ENCODE measurements at regions of chr12 and their contacts with region 1.

Region 1: DNA sequence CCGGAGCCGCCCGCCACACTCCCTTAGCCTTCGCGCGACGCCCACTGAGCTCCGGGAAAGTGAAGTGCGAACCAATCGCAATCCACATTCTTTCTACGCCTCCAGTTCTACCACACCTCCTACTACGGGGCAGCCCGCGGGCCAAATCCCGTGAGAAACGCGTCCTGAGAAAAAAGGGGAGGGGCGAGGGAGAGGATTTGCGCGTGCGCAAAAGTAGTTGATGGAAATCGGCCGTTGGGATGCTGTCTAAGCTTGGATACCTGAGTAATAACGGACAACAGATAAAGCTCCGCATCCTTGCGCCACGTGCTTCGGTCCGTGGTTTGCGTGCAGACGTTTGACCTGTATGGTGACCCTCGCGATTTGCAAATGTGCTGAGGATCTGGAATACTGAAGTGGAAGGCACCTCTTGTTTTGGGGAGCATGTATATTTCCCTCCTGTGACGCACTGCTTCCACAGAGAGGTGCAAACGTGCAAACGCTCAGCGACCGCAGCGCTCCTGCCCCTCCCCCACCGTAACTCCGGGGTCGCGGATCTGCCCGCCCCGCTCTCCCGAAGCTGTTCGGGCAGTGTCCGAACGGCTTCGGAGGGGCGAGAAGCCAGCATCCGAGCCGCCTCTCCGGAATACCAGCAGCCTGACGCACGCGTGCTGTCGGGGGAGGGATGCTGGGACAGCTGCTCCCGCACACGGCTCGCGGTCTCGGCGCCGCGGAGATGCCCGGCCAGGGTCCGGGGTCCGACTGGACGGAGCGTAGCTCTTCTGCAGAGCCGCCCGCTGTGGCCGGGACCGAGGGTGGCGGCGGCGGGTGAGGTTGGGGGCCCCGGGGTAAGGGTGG is at the starts of genes FAM216A and GPN3:
- DNase-seq: peak; percentile 93 to 99 (median 97)

Region 2: DNA sequence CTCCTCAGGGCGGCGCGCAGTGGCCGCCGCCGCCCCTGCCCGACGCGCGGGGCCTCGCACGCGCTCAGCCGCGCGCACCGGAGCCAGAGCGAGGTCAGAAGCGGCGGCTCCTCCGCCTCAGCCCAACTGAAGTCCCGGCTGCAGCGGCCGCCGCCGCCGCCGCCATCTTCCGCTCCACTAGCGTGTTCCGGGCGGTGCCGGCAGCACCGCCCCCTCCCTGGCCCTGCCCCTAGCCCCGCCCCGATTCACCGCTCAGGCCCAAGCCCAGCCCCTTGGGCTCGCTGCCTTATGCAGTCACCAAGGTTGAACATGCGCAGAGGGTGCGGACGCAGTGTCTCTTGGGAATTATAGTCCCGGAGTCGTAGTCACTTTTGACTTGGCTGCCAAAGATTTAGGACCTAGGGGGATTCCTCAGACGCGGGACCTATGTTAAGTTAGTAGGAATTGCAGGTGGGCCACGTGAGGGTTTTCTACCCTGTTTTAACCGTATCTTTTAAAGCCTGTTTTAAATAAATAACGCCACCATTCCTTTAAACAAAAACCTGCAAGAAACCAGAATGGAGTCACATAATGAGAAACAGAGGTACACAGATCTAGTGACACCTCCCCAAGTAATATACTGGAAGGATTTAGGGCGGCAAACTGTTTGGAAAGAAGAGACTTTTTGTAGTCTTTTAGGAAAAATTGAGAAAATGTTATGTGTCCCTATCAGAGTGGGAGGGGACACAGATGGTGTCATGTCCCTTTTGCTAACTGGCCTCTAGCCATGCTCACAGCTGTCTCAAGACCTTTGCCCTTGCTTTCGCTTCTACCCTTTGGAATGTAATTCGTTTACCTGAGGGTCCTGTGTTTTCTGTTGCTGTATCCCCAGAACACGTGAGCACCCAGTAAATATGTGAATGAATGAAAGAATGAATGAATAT is 115.0 kb after region 1 on chr12 and contains the start of gene PPTC7:
- intact Hi-C with region 1: loop called (anchors 5 kb)
- DNase-seq: peak; percentile 97 to 99 (median 98)

Region 3: DNA sequence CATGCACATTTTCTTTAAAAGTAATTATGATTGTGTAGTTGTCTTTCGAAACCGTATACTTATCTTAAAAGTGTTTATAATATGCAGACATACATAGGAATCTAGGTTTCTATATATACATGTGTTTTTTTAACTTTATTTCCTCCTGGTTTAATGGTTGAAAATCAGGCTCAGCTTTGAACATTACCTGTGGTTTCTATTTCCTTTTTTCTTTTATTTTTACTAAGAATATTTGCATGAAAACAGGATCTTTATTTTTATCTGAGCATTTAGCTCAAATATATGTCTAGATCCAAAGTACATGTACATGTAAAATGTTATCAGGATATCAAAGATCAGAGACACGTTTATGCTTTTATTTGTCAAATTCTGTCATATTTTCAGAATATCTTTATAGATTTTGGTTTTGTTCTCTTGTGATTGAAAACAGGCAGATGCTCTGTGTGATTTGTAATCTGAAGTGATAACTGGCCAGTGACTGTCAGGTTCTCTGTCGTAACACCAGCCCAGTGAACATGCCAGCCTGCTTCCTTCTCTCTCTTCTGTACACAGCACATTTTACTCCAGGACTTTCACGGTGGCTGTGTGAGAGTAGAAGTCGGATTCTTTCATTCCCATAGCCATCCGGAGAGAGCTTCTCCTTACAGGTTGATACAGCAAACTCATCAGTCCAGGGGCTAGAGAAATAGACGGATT is 159.2 kb after region 1 on chr12:
- intact Hi-C with region 1: no loop called
- DNase-seq: no peak